ENCODE measurements at regions of chr16 and their contacts with region 1.

Region 1: GRCh38 chr16:14249291-14250032 is 178.3 kb downstream of the MRTFB start:
- DNase-seq: peak; percentile 62
- H3K4me3 ChIP-seq: no peak overlapping the region
- H3K27ac ChIP-seq: no peak overlapping the region
- H3K4me1 ChIP-seq: no peaks in the 10 kb centered on the region
- H3K27me3 ChIP-seq: no peaks in the 10 kb centered on the region
- CTCF ChIP-seq: peak; percentile 68 to 77
- POLR2A ChIP-seq: no peak

Region 2: DNA sequence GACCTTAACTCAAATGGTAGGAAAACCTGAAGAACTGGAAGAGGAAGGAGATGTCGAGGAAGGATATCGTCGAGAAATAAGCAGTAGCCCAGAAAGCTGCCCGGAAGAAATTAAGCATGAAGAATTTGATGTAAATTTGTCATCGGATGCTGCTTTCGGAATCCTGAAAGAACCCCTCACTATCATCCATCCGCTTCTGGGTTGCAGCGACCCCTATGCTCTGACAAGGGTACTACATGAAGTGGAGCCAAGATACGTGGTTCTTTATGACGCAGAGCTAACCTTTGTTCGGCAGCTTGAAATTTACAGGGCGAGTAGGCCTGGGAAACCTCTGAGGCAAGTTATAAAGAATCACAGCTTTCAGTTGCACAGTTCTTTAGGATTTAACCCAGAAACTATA is 314.1 kb before region 1 on chr16:
- CTCF ChIA-PET with region 1: interaction called, 9 read pairs
- POLR2A ChIA-PET with region 1: no interaction called
- dilution Hi-C with region 1: loop called (anchors 25 kb)
- intact Hi-C with region 1: no loop called
- DNase-seq: no peak
- H3K4me3 ChIP-seq: no peak overlapping the region
- H3K27ac ChIP-seq: no peak overlapping the region
- H3K4me1 ChIP-seq: no peaks in the 10 kb centered on the region
- H3K27me3 ChIP-seq: no peaks in the 10 kb centered on the region
- CTCF ChIP-seq: peak; percentile 50 to 58
- POLR2A ChIP-seq: no peak

Region 3: DNA sequence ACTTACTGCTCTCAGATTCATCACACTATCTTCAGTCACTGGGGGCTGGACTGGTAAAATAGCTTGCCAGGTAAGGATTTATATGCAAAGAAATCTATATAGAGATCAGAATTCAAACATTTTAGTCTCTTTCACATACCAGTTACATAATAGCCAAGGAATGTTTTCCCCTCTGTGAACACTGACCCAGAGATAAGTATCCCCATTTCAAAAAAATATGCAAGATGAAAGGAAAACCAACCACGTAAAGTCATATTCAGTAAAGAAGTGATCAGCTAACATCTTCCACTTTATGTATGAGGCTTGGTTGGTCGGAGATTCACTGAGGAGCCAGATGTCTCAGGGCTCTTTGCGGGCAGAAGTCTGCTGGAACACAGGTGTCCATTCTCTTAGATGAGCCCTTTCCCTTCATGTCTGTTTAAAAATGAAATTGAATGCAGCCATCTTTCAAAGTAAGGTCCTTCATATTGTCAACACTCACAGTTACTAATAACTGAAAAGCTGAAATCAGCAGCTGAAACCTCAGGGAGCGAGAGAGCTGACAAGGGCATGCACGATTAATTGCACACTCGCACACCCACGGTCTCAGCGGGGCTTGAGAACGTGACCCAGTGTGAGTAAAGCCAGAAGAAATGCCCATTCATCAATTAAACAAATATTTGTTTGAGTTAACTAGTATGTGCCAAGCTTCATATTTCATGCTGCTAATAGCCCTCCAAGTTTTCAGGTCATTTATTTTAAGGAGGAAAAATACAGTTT is 17.2 kb before region 1 on chr16:
- CTCF ChIA-PET with region 1: interaction called, 11 read pairs
- POLR2A ChIA-PET with region 1: no interaction called
- dilution Hi-C with region 1: no loop called
- intact Hi-C with region 1: no loop called
- DNase-seq: peak; percentile 6
- H3K4me3 ChIP-seq: no peak overlapping the region
- H3K27ac ChIP-seq: no peak overlapping the region
- H3K4me1 ChIP-seq: no peaks in the 10 kb centered on the region
- H3K27me3 ChIP-seq: no peaks in the 10 kb centered on the region
- CTCF ChIP-seq: no peak
- POLR2A ChIP-seq: no peak

Region 4: DNA sequence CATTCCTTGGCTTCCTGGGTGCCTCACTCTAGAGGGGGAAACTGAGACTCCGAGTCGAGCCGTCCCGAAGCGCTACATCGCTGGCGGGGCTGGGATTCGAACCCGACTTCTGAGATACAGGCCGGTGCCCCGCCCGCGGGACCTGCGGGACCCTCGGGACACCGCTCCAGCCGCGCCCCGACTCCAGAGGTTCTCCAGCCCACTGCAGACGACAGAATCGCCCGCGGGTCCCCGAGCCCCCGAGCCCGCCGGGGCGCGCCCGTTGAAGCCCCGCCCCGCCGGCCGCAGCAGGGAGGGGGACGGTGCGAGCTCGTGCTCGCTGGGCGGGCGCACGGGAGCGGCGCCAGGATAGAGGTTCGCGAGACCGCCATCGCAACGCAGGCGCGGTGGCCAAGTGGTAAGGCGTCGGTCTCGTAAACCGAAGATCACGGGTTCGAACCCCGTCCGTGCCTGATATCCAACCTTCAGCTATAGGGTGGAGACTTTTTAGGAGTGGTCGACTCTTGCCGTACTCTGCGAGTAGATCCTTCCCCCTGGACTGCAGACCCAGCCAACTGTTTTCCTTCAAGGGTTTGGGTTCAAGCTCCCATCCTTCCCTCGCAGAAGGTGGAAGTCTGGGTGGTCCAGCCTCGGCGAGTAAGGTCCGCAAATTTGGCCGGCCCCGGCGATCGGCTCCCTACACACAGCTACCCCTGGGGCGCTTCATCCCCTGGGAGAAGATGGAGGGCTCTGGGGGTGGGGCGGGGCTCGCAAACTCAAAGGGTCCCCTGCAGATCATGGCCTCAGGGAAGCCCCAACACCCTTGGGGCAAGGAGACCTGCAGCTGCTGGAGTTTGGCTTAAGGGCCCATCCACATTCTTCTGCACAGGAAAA is 36.3 kb after region 1 on chr16:
- CTCF ChIA-PET with region 1: interaction called, 9 read pairs
- POLR2A ChIA-PET with region 1: no interaction called
- dilution Hi-C with region 1: no loop called
- intact Hi-C with region 1: loop called (anchors 1 kb)
- DNase-seq: peak; percentile 92
- H3K4me3 ChIP-seq: peak overlapping the region; percentile 83 to 99 (median 94)
- H3K27ac ChIP-seq: peak overlapping the region; percentile 55
- H3K4me1 ChIP-seq: peaks cover 2% of the 10 kb centered on the region
- H3K27me3 ChIP-seq: no peaks in the 10 kb centered on the region
- CTCF ChIP-seq: no peak
- POLR2A ChIP-seq: no peak

Region 5: GRCh38 chr16:14337303-14338191 is 88.1 kb after region 1 on chr16:
- CTCF ChIA-PET with region 1: no interaction called
- POLR2A ChIA-PET with region 1: no interaction called
- dilution Hi-C with region 1: no loop called
- intact Hi-C with region 1: no loop called
- DNase-seq: no peak
- H3K4me3 ChIP-seq: no peak overlapping the region
- H3K27ac ChIP-seq: no peak overlapping the region
- H3K4me1 ChIP-seq: no peaks in the 10 kb centered on the region
- H3K27me3 ChIP-seq: peaks cover 0 to 9% of the 10 kb centered on the region in 2 experiments
- CTCF ChIP-seq: no peak
- POLR2A ChIP-seq: no peak

Region 6: GRCh38 chr16:14529010-14529669 is 279.7 kb after region 1 on chr16:
- CTCF ChIA-PET with region 1: interaction called, 23 read pairs
- POLR2A ChIA-PET with region 1: no interaction called
- dilution Hi-C with region 1: no loop called
- intact Hi-C with region 1: loop called (anchors 1 kb)
- DNase-seq: peak; percentile 89
- H3K4me3 ChIP-seq: no peak overlapping the region
- H3K27ac ChIP-seq: no peak overlapping the region
- H3K4me1 ChIP-seq: peaks cover 3% of the 10 kb centered on the region
- H3K27me3 ChIP-seq: no peaks in the 10 kb centered on the region
- CTCF ChIP-seq: peak; percentile 56 to 71
- POLR2A ChIP-seq: no peak